ENCODE measurements at regions of chr6 and their contacts with region 1.

Region 1: DNA sequence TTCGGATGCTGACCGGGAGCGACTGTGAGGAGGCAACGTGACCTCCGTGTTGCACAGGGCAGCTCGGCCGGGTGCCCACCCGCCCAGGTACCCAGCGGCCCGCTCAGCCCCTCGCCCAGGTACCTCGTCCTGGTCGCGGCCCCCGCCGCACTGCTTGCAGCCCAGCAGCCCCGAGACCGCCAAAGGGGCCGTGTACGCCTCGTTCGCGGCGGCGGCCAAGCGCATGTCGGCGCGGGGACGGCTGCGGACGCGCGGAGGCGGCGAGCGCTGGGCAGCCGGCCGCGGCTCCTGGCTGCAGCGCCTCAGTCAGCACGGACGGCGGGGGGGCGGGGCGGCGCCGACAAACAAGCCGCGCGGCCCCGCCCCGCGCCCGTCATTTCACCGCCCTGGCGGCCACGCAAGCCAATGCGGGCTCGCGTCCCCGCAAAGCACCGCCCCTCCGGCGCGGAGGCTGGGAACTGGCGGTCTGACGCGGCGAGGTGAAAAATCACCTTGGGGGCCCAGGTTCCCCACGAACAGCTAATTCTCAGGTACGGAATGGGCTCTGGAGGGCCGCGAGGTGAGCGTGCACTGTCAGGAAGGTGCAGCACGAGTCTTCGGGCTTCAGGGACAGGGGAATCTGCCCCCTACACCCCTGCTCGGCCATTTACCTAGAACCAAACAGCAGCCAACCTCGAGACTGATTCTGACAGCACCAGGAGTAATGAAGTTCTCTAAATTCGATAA is 85.2 kb downstream of the SESN1 start:
- DNase-seq: peak; percentile 92
- H3K4me3 Mint-ChIP-seq: peak overlapping the region; percentile 88
- H3K27ac Mint-ChIP-seq: peak overlapping the region; percentile 72
- H3K4me1 Mint-ChIP-seq: peaks cover 39% of the 10 kb centered on the region
- H3K27me3 Mint-ChIP-seq: peaks cover 8% of the 10 kb centered on the region

Region 2: GRCh38 chr6:108942556-108943492 is 66.6 kb before region 1 on chr6:
- CTCF ChIA-PET with region 1: no interaction called
- POLR2A ChIA-PET with region 1: interaction called, 13 read pairs
- DNase-seq: peak; percentile 75
- H3K4me3 Mint-ChIP-seq: peak overlapping the region; percentile 51
- H3K27ac Mint-ChIP-seq: peak overlapping the region; percentile 82
- H3K4me1 Mint-ChIP-seq: peaks cover 60% of the 10 kb centered on the region
- H3K27me3 Mint-ChIP-seq: peaks cover 3% of the 10 kb centered on the region

Region 3: GRCh38 chr6:109036574-109037294 is 27.3 kb after region 1 on chr6:
- CTCF ChIA-PET with region 1: interaction called, 3 read pairs
- POLR2A ChIA-PET with region 1: interaction called, 16 read pairs
- DNase-seq: no peak
- H3K4me3 Mint-ChIP-seq: no peak overlapping the region
- H3K27ac Mint-ChIP-seq: no peak overlapping the region
- H3K4me1 Mint-ChIP-seq: peaks cover 13% of the 10 kb centered on the region
- H3K27me3 Mint-ChIP-seq: peaks cover 12% of the 10 kb centered on the region